PC-3 (cell line): ENCODE measurements at regions of chr4 and their contacts with region 1.

Region 1: GRCh38 chr4:37977471-37978247 is 17.5 kb downstream of the PTTG2 start:
- DNase-seq: peak; percentile 50
- ATAC-seq: peak; percentile 84
- H3K4me3 ChIP-seq: peak overlapping the region; percentile 67
- H3K27ac ChIP-seq: 0 out of 2 replicates have a peak overlapping the region, but pooled peaks have one; percentile 5
- H3K4me1 ChIP-seq: peaks cover 10% of the 10 kb centered on the region
- H3K27me3 ChIP-seq: no peaks in the 10 kb centered on the region
- CTCF ChIP-seq: peak; percentile 57

Region 2: GRCh38 chr4:37661772-37662171 is 315.9 kb before region 1 on chr4:
- CTCF ChIA-PET with region 1: no interaction called
- POLR2A ChIA-PET with region 1: no interaction called
- intact Hi-C with region 1: no loop called
- DNase-seq: no peak
- ATAC-seq: no peak
- H3K4me3 ChIP-seq: no peak overlapping the region
- H3K27ac ChIP-seq: no peak overlapping the region
- H3K4me1 ChIP-seq: peaks cover 7% of the 10 kb centered on the region
- H3K27me3 ChIP-seq: no peaks in the 10 kb centered on the region
- CTCF ChIP-seq: no peak

Region 3: GRCh38 chr4:37891260-37892159 is 86.1 kb before region 1 on chr4:
- CTCF ChIA-PET with region 1: no interaction called
- POLR2A ChIA-PET with region 1: interaction called, 11 read pairs
- intact Hi-C with region 1: loop called (anchors 10 kb)
- DNase-seq: no peak
- ATAC-seq: peak; percentile 40; the same call in 1 of the 2 replicates
- H3K4me3 ChIP-seq: peak overlapping the region; percentile 69
- H3K27ac ChIP-seq: no peak overlapping the region
- H3K4me1 ChIP-seq: no peaks in the 10 kb centered on the region
- H3K27me3 ChIP-seq: no peaks in the 10 kb centered on the region
- CTCF ChIP-seq: no peak

Region 4: GRCh38 chr4:37936889-37937498 is 40.7 kb before region 1 on chr4:
- CTCF ChIA-PET with region 1: no interaction called
- POLR2A ChIA-PET with region 1: no interaction called
- intact Hi-C with region 1: loop called (anchors 5 kb)
- DNase-seq: no peak
- ATAC-seq: no peak
- H3K4me3 ChIP-seq: no peak overlapping the region
- H3K27ac ChIP-seq: no peak overlapping the region
- H3K4me1 ChIP-seq: no peaks in the 10 kb centered on the region
- H3K27me3 ChIP-seq: no peaks in the 10 kb centered on the region
- CTCF ChIP-seq: no peak